ENCODE measurements at regions of chr6 and their contacts with region 1.

Region 1: DNA sequence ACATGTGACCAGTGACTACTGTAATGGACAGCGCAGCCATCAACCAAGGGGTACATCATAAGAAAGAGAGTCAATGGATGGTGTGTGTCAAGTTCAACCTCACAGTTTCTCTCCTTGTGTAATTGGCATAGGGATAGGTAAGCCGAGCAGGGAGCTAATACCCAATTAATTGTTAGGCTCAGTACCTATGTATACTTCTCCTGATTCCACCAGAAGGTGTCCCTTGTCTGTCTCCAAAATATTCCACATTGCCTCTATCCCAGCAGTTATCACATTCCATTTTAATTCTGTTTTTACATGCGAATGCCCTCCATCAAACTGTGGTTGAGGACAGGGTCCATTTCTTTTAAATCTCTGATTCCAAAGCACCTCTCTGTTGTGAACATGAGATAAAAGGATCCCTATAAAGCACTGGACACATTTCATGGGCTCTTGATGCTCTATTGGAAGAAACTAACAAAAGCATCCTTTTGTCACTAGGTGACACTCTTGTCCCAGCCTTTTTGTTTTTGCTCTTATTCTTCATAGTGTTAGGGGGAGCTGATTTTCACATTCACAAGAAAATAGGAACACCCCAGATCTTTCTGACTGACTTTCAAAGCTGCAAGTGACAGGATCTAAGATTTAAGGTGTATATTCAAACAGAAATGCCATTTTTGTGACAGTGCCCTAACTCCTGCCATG is 38.9 kb downstream of the FBXO9 start:
- DNase-seq: peak in 1 of 2 experiments; percentile 21
- H3K4me3 ChIP-seq: no peak overlapping the region
- H3K4me3 Mint-ChIP-seq: no peak overlapping the region
- H3K27ac Mint-ChIP-seq: no peak overlapping the region
- H3K4me1 ChIP-seq: no peaks in the 10 kb centered on the region
- H3K4me1 Mint-ChIP-seq: no peaks in the 10 kb centered on the region
- H3K27me3 ChIP-seq: no peaks in the 10 kb centered on the region
- H3K27me3 Mint-ChIP-seq: no peaks in the 10 kb centered on the region
- CTCF ChIP-seq: peak; percentile 41 to 53

Region 2: GRCh38 chr6:53134601-53135235 is 30.6 kb after region 1 on chr6:
- CTCF ChIA-PET with region 1: interaction called, 11 read pairs
- POLR2A ChIA-PET with region 1: no interaction called
- intact Hi-C with region 1: no loop called
- DNase-seq: peak; percentile 73 to 75
- H3K4me3 ChIP-seq: no peak overlapping the region
- H3K4me3 Mint-ChIP-seq: peak overlapping the region; percentile 47
- H3K27ac Mint-ChIP-seq: peak overlapping the region; percentile 55
- H3K4me1 ChIP-seq: peaks cover 28% of the 10 kb centered on the region
- H3K4me1 Mint-ChIP-seq: peaks cover 24% of the 10 kb centered on the region
- H3K27me3 ChIP-seq: no peaks in the 10 kb centered on the region
- H3K27me3 Mint-ChIP-seq: no peaks in the 10 kb centered on the region
- CTCF ChIP-seq: no peak

Region 3: DNA sequence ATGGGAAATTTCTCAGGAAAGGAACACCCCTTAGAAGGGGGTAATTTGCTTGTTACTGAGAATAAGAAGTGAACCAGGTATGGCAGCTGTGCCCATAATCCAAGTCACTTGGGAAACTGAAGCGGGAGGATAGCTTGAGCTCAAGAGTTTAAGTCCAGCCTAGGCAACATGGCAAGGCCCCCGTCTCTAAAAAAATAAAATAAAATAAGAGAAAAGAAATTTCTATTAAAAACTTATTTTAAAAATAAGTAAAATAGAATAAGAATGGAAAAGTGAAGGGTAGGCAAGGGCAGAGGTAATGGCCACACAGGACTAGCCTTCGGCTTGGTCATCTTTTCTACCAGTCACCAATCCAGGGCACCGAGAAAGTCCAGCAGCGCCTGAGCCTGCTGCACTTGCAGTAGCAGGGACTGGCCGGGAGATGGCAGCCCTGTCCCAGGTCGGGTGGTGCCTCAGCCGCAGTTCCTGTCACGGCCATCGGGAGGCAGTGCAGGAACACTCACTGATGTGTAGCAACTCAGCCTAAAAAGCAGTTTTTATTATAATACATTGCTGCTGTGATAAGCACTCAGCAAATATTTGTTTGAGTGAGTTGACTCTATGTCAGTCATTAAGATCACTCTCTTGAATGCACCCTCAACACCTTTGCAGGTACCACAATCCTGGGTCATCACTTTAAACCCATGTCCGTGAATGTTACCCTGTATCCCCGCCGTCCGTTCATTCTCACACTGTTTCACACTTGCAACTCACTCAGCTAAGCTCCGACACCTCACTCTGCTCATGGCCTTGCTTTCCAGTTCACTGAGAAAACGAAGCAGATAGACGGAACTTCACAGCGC is 67.7 kb after region 1 on chr6:
- CTCF ChIA-PET with region 1: interaction called, 4 read pairs
- POLR2A ChIA-PET with region 1: no interaction called
- intact Hi-C with region 1: loop called (anchors 1 kb)
- DNase-seq: peak; percentile 77 to 90
- H3K4me3 ChIP-seq: no peak overlapping the region
- H3K4me3 Mint-ChIP-seq: no peak overlapping the region
- H3K27ac Mint-ChIP-seq: no peak overlapping the region
- H3K4me1 ChIP-seq: peaks cover 6% of the 10 kb centered on the region; the same call in 1 of the 2 replicates
- H3K4me1 Mint-ChIP-seq: no peaks in the 10 kb centered on the region
- H3K27me3 ChIP-seq: no peaks in the 10 kb centered on the region
- H3K27me3 Mint-ChIP-seq: no peaks in the 10 kb centered on the region
- CTCF ChIP-seq: peak; percentile 100

Region 4: GRCh38 chr6:53437557-53438202 is 333.5 kb after region 1 on chr6:
- CTCF ChIA-PET with region 1: no interaction called
- POLR2A ChIA-PET with region 1: no interaction called
- intact Hi-C with region 1: loop called (anchors 5 kb)
- DNase-seq: peak; percentile 43 to 64
- H3K4me3 ChIP-seq: no peak overlapping the region
- H3K4me3 Mint-ChIP-seq: no peak overlapping the region
- H3K27ac Mint-ChIP-seq: peak overlapping the region; percentile 30
- H3K4me1 ChIP-seq: 0 out of 2 replicates have a peak, but pooled peaks cover 10% of the 10 kb centered on the region
- H3K4me1 Mint-ChIP-seq: no peaks in the 10 kb centered on the region
- H3K27me3 ChIP-seq: no peaks in the 10 kb centered on the region
- H3K27me3 Mint-ChIP-seq: peaks cover 5% of the 10 kb centered on the region
- CTCF ChIP-seq: peak; percentile 30 to 68